ENCODE measurements at regions of chr6 and their contacts with region 1.

Region 1: DNA sequence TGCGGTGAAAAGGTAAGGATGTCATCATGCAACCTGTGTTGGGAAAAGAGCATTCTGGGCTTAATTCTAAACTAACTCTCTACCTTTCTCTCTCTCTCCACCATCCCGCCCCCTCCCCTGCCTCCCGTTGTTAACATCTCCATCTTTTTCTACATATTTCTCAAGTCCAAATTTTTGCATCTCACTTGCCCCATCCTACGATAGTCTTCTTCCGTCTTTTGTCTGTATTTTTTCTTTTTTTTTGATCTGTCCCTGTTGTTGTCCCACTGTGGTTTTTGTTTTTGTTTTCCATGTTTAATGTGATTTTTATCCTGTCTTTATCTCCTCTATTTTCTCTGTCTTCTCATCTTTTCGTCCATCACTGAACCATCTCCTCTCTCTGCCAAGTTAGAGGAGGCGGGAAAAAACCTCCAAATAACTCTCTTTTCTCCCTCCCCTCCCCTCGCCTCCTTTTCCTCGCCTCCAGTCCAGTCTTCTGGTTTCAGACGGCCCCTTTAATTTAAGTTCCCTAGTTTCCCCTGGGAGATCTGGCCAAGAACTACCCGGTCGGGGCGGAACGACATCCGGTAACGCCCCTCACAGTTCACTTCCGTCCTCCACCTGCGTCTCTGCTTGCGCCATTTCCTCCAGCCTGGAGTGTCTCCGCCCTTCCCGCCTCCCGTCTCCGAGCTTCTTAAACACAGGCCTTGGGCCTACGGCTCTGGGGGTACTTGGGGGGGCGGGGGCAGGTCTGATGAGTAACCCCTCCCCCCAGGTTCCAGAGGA is at the start of gene NFKBIL1:
- DNase-seq: peak; percentile 88 to 89
- H3K4me3 ChIP-seq: peak within 1 kb of the TSS; percentile 78
- H3K27ac ChIP-seq: peak within 1 kb of the TSS; percentile 89
- H3K4me1 ChIP-seq: peaks cover 18% of the 10 kb centered on the region
- H3K27me3 ChIP-seq: no peaks in the 10 kb centered on the region
- CTCF ChIP-seq: peak; percentile 23; the same call in 1 of the 2 replicates
- total RNA-seq, gene NFKBIL1: 26.1 and 38.3 TPM in 2 replicates

Region 2: DNA sequence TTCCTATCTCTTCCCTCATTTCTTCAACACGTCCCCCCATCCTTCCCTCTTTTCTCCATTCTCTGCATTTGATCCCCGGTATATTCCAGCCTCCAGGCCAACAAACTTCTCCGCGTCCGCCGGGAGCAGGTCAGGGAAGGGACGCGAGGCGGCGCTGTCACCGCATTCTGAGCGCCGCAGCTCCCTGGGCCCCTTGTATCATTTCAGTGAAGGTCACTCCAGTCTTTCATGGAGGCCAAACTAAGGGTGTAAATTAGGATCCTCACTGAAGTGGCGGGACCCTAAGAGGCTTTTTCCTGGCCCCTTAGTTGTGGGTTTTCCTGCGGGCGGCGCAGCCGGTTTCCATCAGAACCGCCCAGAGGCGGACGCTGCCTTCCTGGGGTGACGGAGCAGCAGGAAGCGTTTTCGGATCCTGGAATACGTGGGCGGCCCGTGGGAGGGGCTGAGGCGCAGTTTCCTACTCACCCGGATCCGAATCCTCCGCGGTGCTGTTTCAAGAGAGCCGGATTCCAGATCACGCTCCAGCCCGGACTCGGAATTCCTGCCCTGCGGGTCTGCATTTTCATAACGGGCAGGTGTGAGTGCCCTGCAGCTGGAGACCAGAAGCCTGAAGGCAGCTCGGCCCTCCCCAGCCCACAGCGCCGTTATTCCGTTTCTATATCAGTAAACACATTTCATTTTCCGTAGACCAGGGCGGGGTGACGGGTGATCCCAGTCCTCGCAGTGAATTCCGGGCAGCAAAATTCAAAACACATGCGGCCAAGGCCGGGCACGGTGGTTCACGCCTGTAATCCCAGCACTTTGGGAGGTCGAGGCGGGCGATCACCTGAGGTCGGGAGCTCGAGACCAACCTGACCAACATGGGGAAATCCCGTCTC is 147.3 kb before region 1 on chr6:
- CTCF ChIA-PET with region 1: no interaction called
- POLR2A ChIA-PET with region 1: interaction called, 15 read pairs
- intact Hi-C with region 1: loop called (anchors 2 kb)
- DNase-seq: peak; percentile 65 to 88
- H3K4me3 ChIP-seq: peak overlapping the region; percentile 67
- H3K27ac ChIP-seq: peak overlapping the region; percentile 40; the same call in 1 of the 2 replicates
- H3K4me1 ChIP-seq: peaks cover 10% of the 10 kb centered on the region
- H3K27me3 ChIP-seq: 0 out of 2 replicates have a peak, but pooled peaks cover 15% of the 10 kb centered on the region
- CTCF ChIP-seq: peak; percentile 88

Region 3: DNA sequence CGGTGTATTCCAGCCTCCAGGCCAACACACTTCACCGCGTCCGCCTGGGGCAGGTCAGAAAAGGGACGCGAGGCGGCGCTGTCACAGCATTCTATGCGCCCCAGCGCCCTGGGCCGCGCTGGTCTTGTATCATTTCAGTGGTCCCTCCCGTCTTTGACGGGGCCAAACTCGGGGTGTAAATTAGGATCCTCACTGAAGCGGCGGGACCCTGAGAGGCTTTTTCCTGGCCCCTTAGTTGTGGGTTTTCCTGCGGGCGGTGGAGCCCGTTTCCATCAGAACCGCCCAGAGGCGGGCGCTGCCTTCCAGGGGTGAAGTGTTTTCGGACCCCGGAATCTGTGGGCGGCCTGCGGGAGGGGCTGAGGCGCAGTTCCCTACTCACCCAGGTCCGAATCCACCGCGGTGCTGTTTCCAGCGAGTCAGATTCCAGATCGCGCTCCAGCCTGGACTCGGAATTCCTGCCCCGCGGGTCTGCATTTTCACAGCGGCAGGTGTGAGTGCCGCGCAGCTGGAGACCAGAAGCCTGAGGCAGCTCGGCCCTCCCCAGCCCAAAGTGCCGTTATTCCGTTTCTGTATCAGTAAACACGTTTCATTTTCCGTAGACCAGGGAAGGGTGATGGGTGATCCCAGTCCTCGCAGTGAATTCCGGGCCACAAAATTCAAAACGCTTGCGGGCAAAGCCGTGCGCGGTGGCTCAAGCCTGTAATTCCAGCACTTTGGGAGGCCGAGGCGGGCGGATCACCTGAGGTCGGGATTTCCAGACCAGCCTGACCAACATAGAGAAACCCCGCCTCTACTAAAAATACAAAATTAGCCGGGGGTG is 53.1 kb before region 1 on chr6:
- CTCF ChIA-PET with region 1: interaction called, 13 read pairs
- POLR2A ChIA-PET with region 1: interaction called, 12 read pairs
- intact Hi-C with region 1: loop called (anchors 1 kb)
- DNase-seq: peak; percentile 54 to 84
- H3K4me3 ChIP-seq: peak overlapping the region; percentile 67
- H3K27ac ChIP-seq: peak overlapping the region; percentile 47; the same call in 1 of the 2 replicates
- H3K4me1 ChIP-seq: peaks cover 22% of the 10 kb centered on the region
- H3K27me3 ChIP-seq: no peaks in the 10 kb centered on the region
- CTCF ChIP-seq: peak; percentile 87

Region 4: DNA sequence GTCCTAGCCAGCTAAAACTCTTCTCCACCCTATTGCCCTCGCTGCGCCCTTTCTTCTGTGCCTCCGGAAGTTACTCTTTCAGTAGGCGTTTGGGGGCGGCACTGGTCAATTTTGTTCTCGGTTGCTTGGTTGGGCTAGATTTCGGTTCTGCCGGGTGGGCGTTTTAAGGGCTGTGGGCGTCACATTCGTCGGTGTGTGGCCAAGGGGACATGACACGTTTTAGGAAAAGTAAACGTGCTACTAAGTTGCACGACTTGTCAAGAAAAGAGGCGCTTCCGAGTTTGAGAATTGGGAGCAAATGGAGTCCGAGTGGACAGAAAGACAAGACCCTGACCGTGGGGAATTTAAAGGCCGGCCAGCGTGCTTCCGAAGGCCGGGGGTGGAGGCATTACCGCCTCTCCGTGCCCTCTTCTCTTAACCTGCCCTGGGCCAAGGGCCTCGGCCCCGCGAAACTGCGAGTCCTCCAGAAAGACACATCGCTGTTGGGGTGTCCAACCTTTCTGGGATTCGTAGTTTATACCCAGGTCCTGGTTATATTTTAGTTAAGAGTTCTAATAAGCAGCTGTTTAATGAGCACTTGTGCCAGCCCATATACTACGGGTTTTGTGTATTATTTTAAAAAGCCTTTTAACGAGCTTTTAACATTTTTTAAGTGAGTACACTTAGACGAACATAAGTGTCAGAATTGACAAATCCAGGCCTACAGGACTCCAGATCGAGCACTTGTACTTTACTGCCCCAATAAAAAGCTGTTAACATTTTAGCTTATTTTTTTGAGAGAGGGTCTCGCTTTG is 106.0 kb after region 1 on chr6:
- CTCF ChIA-PET with region 1: no interaction called
- POLR2A ChIA-PET with region 1: interaction called, 10 read pairs
- intact Hi-C with region 1: no loop called
- DNase-seq: peak in 1 of 2 experiments; percentile 86
- H3K4me3 ChIP-seq: peak overlapping the region; percentile 79
- H3K27ac ChIP-seq: peak overlapping the region; percentile 92
- H3K4me1 ChIP-seq: peaks cover 14% of the 10 kb centered on the region
- H3K27me3 ChIP-seq: no peaks in the 10 kb centered on the region
- CTCF ChIP-seq: no peak; the same call in 1 of the 2 replicates

Region 5: DNA sequence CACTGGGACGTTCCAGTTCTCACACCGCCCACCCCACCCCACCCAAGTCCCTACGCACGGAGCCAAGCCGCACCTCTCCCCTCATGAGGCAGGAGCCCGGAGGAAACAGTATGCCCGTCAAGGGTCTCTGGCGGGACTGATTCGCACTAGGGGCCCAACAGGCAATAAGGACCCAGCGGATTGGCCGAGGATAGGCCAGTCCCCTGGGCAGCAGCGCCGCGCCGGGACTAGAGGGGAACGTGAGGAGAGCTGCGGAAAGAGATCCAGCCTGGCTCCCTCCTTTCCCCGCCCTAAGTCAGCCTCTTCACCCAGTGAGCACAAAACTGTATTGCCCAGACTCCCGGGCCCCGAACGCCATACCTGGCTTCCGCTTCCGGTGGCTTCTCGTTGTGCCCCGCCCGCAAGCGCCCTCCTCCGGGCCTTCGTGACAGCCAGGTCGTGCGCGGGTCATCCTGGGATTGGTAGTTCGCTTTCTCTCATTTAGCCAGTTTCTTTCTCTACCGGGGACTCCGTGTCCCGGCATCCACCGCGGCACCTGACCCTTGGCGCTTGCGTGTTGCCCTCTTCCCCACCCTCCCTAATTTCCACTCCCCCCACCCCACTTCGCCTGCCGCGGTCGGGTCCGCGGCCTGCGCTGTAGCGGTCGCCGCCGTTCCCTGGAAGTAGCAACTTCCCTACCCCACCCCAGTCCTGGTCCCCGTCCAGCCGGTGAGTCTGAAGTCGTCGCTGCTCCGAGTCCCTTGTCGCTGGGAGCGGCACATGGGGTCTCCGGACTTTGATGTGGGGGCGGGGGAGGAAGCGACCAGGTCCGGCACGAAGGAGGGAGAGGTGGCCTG is 118.6 kb after region 1 on chr6 and contains the start of gene CSNK2B:
- CTCF ChIA-PET with region 1: no interaction called
- POLR2A ChIA-PET with region 1: interaction called, 3 read pairs
- intact Hi-C with region 1: loop called (anchors 2 kb)
- DNase-seq: peak; percentile 95 to 96
- H3K4me3 ChIP-seq: peak within 1 kb of the TSS; percentile 90
- H3K27ac ChIP-seq: peak within 1 kb of the TSS; percentile 80
- H3K4me1 ChIP-seq: peaks cover 24% of the 10 kb centered on the region
- H3K27me3 ChIP-seq: no peaks in the 10 kb centered on the region
- CTCF ChIP-seq: no peak
- total RNA-seq, gene CSNK2B: 152 and 173 TPM in 2 replicates

Region 6: GRCh38 chr6:31958741-31959739 is 411.9 kb after region 1 on chr6 and contains the starts of genes NELFE and SKIC2:
- CTCF ChIA-PET with region 1: no interaction called
- POLR2A ChIA-PET with region 1: no interaction called
- intact Hi-C with region 1: loop called (anchors 2 kb)
- DNase-seq: peak; percentile 94 to 98
- H3K4me3 ChIP-seq: peak within 1 kb of the TSS; percentile 95
- H3K27ac ChIP-seq: 0 out of 2 replicates have a peak within 1 kb of the TSS, but pooled peaks have one; percentile 40
- H3K4me1 ChIP-seq: peaks cover 12% of the 10 kb centered on the region
- H3K27me3 ChIP-seq: no peaks in the 10 kb centered on the region
- CTCF ChIP-seq: no peak
- total RNA-seq, gene NELFE: 43.0 and 50.8 TPM in 2 replicates
- total RNA-seq, gene SKIC2: 67.9 and 86.0 TPM in 2 replicates

Region 7: DNA sequence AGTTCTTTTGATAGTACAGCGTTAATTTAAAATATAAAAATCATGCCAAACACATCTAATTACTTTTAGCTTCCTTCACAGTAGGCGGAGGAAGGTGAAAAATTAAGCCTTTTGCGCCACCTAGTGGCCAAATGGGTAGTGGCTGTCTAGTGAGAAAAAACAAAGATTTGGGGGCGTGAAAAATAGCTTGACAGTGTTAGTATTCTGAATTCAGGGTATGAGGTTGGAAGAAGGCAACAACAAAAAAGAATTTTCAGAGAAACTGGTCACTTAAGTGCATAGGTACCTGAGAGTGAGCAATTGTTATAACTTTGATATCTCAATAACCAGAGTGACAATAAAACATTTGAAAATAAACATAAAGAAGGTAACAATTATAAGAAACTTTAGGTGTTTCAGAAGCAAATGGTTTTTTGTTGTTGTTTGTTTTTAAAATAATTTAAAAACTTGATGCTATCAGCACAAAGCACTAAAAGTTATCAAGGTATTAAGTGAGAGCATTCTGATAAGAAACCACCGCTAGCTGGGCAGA is 1321.2 kb after region 1 on chr6:
- CTCF ChIA-PET with region 1: no interaction called
- POLR2A ChIA-PET with region 1: no interaction called
- intact Hi-C with region 1: loop called (anchors 1 kb)
- DNase-seq: peak; percentile 55 to 67
- H3K4me3 ChIP-seq: no peak overlapping the region
- H3K27ac ChIP-seq: no peak overlapping the region
- H3K4me1 ChIP-seq: no peaks in the 10 kb centered on the region
- H3K27me3 ChIP-seq: no peaks in the 10 kb centered on the region
- CTCF ChIP-seq: peak; percentile 95

Measured in PC-9 (cell line).